CD4-positive, alpha-beta T cell (primary cell): ENCODE measurements at regions of chr22 and their contacts with region 1.

Region 1: GRCh38 chr22:24230911-24231656 is 13.8 kb downstream of the GGT5 start:
- DNase-seq: peak; percentile 46 to 76 (median 57)
- ATAC-seq: peak; percentile 76
- H3K4me3 ChIP-seq: no peak overlapping the region
- H3K4me3 Mint-ChIP-seq: no peak overlapping the region
- H3K27ac ChIP-seq: no peak overlapping the region
- H3K27ac Mint-ChIP-seq: no peak overlapping the region
- H3K4me1 ChIP-seq: no peaks in the 10 kb centered on the region
- H3K4me1 Mint-ChIP-seq: peaks cover 4% of the 10 kb centered on the region
- H3K27me3 ChIP-seq: no peaks in the 10 kb centered on the region
- H3K27me3 Mint-ChIP-seq: no peaks in the 10 kb centered on the region
- CTCF ChIP-seq: peak; percentile 42

Region 2: GRCh38 chr22:24133187-24133965 is 97.7 kb before region 1 on chr22:
- CTCF ChIA-PET with region 1: no interaction called
- POLR2A ChIA-PET with region 1: no interaction called
- intact Hi-C with region 1: loop called in 1 of 2 experiments (anchors 2 kb)
- DNase-seq: peak; percentile 30 to 73 (median 48)
- ATAC-seq: peak; percentile 50
- H3K4me3 ChIP-seq: no peak overlapping the region
- H3K4me3 Mint-ChIP-seq: no peak overlapping the region
- H3K27ac ChIP-seq: no peak overlapping the region
- H3K27ac Mint-ChIP-seq: peak overlapping the region; percentile 92
- H3K4me1 ChIP-seq: peaks cover 18% of the 10 kb centered on the region
- H3K4me1 Mint-ChIP-seq: peaks cover 23% of the 10 kb centered on the region
- H3K27me3 ChIP-seq: no peaks in the 10 kb centered on the region
- H3K27me3 Mint-ChIP-seq: no peaks in the 10 kb centered on the region
- CTCF ChIP-seq: peak; percentile 58